ENCODE measurements at regions of chr10 and their contacts with region 1.

Region 1: DNA sequence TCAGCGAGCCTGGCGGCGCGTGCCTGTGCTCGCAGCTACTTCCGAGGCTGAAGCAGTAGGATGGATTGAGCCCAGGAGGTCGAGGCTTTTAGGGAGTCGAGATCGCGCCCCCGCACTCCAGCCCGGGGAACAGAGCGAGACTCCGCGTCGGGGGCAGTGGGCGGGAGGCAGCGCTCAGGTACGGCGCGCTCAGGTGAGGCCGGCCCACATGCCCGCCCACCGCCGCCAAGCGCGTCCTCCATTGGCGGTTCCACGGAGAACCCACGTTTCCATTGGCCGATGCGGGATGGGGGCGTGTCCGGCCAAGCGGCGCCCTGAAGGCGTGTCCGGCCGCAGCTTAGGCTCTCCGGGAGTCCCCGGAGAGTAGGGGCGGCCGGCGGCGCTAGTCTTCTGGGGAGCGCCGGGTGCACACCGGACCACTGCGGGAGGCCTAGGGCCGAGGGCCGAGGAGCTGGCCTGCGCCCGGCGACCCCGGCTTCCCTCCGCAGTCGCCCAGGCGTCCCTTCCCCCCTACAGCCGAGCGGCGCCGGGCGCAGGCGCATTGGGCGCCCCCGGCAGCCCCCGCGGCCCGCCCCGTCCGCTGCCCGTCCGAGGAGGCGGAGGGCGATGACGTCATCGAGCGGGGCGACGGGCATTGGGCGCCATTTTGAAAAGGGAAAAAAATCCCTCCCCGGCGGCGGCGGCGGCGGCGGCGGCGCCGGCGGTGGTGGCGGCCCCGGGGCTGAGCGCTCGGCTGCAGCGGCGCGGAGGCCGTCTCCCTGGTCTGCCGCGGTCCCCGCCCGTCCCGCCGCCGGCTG is at the start of gene PPP2R2D:
- DNase-seq: peak; percentile 99
- H3K4me3 Mint-ChIP-seq: peak within 1 kb of the TSS; percentile 90
- H3K27ac Mint-ChIP-seq: peak within 1 kb of the TSS; percentile 79
- H3K4me1 Mint-ChIP-seq: peaks cover 47% of the 10 kb centered on the region
- H3K27me3 Mint-ChIP-seq: peaks cover 20% of the 10 kb centered on the region
- total RNA-seq, gene PPP2R2D: 33.2 and 36.2 TPM in 2 replicates

Region 2: DNA sequence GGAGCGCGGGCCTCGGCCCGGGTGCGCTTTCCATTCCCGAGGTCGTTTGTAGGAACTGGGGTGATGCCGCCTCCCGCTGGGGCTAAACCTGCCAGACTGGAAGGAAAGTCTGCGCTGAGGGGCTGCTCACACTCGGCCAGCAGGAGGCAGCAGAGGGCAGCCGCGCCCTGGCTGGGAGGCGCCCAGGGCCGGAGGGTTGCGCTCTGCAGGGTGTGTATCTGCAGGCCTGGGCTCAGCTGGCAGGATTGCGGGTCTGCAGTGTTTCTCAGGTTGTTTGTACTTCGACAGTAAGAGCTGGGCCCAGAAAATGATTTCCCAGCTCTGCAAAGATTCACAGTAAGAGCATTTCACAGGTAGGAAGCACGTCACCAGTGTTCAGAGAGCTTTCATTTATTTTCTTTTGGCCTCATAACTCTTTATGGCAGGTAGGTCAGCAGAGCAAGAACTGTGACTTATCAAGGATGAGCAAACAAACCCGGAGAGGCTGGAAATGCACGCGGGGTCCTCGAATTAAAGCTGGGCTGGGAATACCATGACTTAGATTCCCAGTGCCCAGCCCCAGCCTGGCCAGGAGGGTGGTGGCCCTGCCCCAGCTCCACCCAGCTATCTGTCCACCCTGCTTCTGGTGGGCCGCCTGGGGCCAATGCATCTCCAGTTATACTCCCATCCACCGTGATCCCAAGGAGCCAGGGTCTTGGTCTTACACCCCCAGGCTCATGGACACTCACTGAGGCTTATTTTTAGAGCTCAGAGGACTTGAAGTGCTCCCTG is 15.0 kb before region 1 on chr10:
- intact Hi-C with region 1: loop called (anchors 2 kb)
- DNase-seq: peak; percentile 95
- H3K4me3 Mint-ChIP-seq: no peak overlapping the region
- H3K27ac Mint-ChIP-seq: no peak overlapping the region
- H3K4me1 Mint-ChIP-seq: peaks cover 2% of the 10 kb centered on the region
- H3K27me3 Mint-ChIP-seq: peaks cover 7% of the 10 kb centered on the region

Region 3: DNA sequence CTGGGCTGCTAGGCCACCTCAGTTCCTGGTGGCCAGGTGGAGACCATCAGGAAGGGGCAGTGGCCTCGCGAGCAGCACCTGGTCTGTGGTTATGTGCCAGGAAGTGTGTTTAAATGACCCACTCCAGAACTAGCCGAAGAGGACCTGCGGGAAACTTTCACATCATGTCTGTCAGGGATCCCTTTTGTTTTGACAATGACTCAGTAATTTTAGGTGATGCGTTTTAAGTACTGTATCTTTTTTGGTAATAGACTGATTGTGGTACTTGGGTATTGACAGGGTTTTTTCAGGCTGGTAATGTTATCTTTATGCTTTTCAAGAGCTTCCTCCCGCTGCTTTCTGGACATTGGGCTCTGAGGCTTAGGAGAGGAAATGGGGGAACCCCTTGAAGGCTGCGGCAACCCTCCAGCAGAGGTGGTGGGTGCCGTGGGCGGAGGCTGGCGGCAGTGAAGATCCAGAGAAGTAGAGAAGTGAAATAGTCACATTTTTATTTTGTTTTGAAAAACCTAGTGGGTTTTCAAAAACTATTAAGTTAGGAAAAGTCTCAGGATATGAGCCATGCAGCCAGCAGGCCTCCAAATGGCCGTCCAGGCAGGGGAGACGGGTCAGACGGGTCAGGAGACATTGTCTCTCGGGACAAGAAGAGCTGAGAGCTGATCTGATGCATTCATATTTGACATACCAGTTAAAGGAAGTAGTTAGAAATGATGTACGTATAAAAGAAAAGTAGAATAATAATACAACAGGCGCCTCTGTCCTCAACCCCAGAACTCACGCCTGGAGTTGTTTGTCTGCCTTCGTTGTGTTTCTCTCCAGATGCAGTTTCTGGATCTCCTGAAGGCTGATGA is 27.9 kb after region 1 on chr10:
- intact Hi-C with region 1: loop called (anchors 1 kb)
- DNase-seq: peak; percentile 77
- H3K4me3 Mint-ChIP-seq: peak overlapping the region; percentile 47
- H3K27ac Mint-ChIP-seq: peak overlapping the region; percentile 79
- H3K4me1 Mint-ChIP-seq: peaks cover 51% of the 10 kb centered on the region
- H3K27me3 Mint-ChIP-seq: no peaks in the 10 kb centered on the region

Region 4: DNA sequence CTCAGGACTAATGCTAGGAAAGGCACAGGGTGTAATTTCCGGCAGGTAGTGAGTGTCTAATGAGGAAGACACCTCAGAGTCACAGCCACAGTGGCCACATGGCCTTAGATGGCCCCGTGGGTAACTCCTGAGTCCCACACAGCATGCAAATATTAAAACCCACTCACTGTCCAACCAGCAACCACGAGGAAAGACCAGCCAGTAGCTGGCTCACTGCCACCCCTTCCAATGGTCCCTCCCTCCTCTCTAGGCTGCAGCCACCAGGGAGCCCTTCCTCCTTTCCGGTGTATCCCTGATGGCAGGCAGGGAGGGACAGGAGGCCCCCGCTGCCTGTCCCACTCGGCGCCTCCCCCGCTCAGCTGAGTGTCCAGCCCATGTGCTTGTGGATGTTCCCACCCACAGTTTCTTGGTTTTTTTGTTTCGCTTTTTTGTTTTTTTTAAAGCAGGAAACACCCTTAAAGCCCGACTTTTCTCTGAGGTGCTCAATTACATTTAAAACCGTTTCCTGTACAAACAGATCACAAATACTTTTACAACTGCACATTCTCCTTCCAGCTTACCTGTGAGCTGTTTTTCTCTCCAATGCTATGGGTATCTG is 72.0 kb after region 1 on chr10:
- intact Hi-C with region 1: loop called (anchors 2 kb)
- DNase-seq: peak; percentile 86
- H3K4me3 Mint-ChIP-seq: peak overlapping the region; percentile 81
- H3K27ac Mint-ChIP-seq: peak overlapping the region; percentile 90
- H3K4me1 Mint-ChIP-seq: peaks cover 63% of the 10 kb centered on the region
- H3K27me3 Mint-ChIP-seq: no peaks in the 10 kb centered on the region

Region 5: DNA sequence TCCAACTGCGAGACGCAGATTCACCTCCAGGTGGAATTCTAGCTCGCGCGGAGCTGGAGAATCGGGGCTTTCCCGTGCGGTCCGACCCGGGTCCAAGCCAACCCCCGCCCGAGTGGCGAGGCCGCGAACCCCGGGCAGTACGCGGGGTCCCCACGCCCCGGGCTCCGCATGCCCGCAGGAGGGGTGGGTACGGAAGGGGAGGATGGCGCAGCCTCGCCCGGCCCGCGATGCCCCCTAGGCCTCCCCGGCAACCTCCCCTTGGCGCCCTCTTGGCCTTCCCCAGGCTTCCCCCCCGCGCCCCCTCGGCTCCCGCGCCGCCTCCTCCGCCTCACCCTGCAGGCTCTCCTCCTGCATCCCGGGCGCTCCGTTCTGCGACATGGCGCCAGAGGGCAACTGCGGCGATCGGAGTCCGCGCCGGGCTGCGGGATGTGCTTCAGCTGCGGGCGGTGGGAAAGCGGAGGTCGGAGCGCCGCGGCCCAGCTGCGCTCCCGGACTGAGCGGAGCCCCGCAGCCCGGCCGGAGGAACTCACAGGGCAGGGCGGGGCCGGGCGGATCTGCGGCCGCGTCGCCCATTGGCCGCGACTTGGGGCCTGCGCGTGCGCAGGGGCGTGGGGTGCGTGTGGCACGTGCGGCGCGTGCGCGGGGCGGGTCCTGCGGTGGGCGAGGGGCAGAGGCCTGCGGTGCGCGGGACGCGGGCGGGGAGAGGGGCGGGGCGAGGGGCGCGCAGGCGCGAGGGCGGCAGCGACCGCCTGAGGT is 81.1 kb after region 1 on chr10 and contains the start of gene BNIP3:
- intact Hi-C with region 1: loop called (anchors 1 kb)
- DNase-seq: peak; percentile 98
- H3K4me3 Mint-ChIP-seq: peak within 1 kb of the TSS; percentile 91
- H3K27ac Mint-ChIP-seq: peak within 1 kb of the TSS; percentile 87
- H3K4me1 Mint-ChIP-seq: peaks cover 36% of the 10 kb centered on the region
- H3K27me3 Mint-ChIP-seq: peaks cover 14% of the 10 kb centered on the region
- total RNA-seq, gene BNIP3: 94.4 and 95.1 TPM in 2 replicates

Region 6: DNA sequence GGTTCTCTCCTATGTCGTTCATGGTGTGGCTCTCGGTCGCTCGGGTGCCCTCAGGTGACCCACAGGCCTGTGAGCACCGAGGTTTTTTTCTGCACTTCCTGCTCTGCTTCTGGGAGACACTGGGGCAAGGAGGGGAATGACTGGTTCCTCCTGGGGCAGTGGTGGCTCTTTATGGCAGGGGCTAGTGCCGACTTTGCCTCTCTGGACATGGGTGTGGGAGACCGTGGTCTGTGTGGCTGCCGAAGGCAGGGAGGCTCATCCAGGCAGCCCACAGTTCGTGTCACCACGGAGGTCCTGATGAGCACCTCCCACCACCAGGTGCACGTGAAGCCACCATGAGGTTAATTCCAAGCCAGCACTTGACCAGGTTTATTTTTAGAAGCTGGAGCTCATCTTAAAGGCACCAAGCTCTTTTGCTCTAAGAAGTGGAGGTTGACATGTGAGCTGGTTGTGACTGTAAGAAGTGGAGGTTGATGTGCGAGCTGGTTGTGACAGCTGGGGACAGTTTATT is 261.5 kb after region 1 on chr10:
- intact Hi-C with region 1: loop called (anchors 1 kb)
- DNase-seq: peak; percentile 89
- H3K4me3 Mint-ChIP-seq: peak overlapping the region; percentile 83
- H3K27ac Mint-ChIP-seq: peak overlapping the region; percentile 99
- H3K4me1 Mint-ChIP-seq: peaks cover 41% of the 10 kb centered on the region
- H3K27me3 Mint-ChIP-seq: no peaks in the 10 kb centered on the region

Measured in activated CD4-positive, alpha-beta T cell treated with anti-CD3 and anti-CD28 coated beads, Interleukin-2, amount 10 ng/mL, durations not matched to agents 24 days and 14 days (primary cell).